ENCODE measurements at regions of chr20 and their contacts with region 1.

Region 1: DNA sequence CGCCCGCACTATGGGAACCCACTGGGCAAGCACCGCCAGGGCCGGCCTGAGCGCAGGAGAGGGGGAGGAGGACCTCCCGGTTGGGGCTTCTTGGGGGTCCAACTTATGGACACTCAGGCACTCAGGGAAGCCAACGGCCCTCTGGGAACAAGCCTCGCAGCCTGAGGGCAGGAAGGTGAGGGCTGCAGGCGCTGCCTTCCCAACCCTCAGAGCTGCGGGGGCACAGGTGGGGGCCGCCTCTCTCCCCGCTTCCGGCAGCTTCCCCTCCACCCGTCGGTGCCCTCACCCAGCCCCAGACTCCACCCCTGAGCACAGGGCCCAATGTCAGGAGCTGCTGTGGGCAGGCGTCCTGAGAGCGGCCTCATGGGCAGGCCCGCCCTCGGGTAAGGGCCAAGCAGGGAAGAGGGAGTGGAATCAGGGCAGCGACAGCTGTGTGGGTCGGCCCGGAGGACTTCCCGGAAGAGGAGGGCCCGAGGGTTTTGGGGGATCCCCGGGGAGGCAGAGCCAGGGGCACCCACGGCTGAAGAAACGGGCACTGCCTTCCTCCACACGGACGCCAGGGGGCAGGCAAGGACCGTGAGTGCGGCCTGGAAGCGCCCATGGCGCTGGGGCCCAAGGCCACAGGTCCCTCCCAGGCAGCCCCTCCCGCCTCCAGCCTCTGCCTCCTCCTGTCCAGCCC is 488 bp upstream of the PTK6 start:
- DNase-seq: peak; percentile 96 to 98 (median 97)
- H3K4me3 ChIP-seq: peak overlapping the region; percentile 13 to 77 (median 41)
- H3K4me3 Mint-ChIP-seq: peak overlapping the region; percentile 65 to 84
- H3K27ac ChIP-seq: peak overlapping the region; percentile 89 to 90
- H3K27ac Mint-ChIP-seq: peak overlapping the region; percentile 82 to 93 (median 90)
- H3K4me1 ChIP-seq: peaks cover 23 to 28% of the 10 kb centered on the region in 2 donors
- H3K4me1 Mint-ChIP-seq: peaks cover 16% of the 10 kb centered on the region
- H3K27me3 ChIP-seq: peaks cover 0 to 18% of the 10 kb centered on the region in 2 donors
- H3K27me3 Mint-ChIP-seq: peaks cover 9 to 22% (median 13%) of the 10 kb centered on the region in 3 donors
- CTCF ChIP-seq: peak; percentile 96

Region 2: DNA sequence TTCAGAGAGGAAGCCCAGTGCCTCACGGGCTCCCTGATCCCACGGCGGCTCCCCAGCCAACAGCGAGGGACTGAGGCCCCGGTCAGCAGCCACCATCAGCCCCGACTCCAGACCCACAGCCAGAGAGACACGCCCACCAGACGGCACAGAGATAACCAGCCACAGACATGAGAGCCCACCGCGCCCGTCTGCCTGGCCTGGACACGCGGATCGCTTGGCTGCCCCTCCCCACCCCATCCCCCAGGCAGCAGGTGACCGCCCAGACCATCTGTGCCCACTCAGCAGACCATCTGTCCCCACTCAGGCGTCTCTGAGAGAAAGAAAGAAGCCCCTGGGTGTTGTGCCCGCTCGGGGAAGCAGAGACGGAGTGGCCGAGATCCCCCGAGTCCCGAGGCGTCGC is 121.0 kb before region 1 on chr20:
- intact Hi-C with region 1: no loop called
- DNase-seq: no peak
- H3K4me3 ChIP-seq: no peak overlapping the region
- H3K4me3 Mint-ChIP-seq: no peak overlapping the region
- H3K27ac ChIP-seq: no peak overlapping the region
- H3K27ac Mint-ChIP-seq: no peak overlapping the region
- H3K4me1 ChIP-seq: no peaks in the 10 kb centered on the region
- H3K4me1 Mint-ChIP-seq: no peaks in the 10 kb centered on the region
- H3K27me3 ChIP-seq: no peaks in the 10 kb centered on the region
- H3K27me3 Mint-ChIP-seq: peaks cover 7 to 11% (median 8%) of the 10 kb centered on the region in 3 donors
- CTCF ChIP-seq: no peak

Region 3: GRCh38 chr20:63501818-63502670 is 35.6 kb before region 1 on chr20:
- intact Hi-C with region 1: no loop called
- DNase-seq: no peak
- H3K4me3 ChIP-seq: no peak overlapping the region
- H3K4me3 Mint-ChIP-seq: no peak overlapping the region
- H3K27ac ChIP-seq: no peak overlapping the region
- H3K27ac Mint-ChIP-seq: no peak overlapping the region
- H3K4me1 ChIP-seq: peaks cover 4 to 13% of the 10 kb centered on the region in 2 donors
- H3K4me1 Mint-ChIP-seq: no peaks in the 10 kb centered on the region
- H3K27me3 ChIP-seq: peaks cover 8 to 36% of the 10 kb centered on the region in 2 donors
- H3K27me3 Mint-ChIP-seq: peaks cover 39 to 64% (median 41%) of the 10 kb centered on the region in 3 donors
- CTCF ChIP-seq: no peak

Region 4: GRCh38 chr20:63520504-63520933 is 17.1 kb before region 1 on chr20 and contains the start of gene PPDPF:
- intact Hi-C with region 1: loop called (anchors 1 to 2 kb)
- DNase-seq: peak; percentile 73 to 83 (median 75)
- H3K4me3 ChIP-seq: peak within 1 kb of the TSS; percentile 50 to 83 (median 68)
- H3K4me3 Mint-ChIP-seq: peak within 1 kb of the TSS; percentile 78 to 83
- H3K27ac ChIP-seq: peak within 1 kb of the TSS in 1 of 2 donors; percentile 53
- H3K27ac Mint-ChIP-seq: peak within 1 kb of the TSS; percentile 19 to 85 (median 63)
- H3K4me1 ChIP-seq: peaks cover 16 to 26% of the 10 kb centered on the region in 2 donors
- H3K4me1 Mint-ChIP-seq: peaks cover 12% of the 10 kb centered on the region
- H3K27me3 ChIP-seq: peaks cover 0 to 23% of the 10 kb centered on the region in 2 donors
- H3K27me3 Mint-ChIP-seq: peaks cover 24 to 41% (median 26%) of the 10 kb centered on the region in 3 donors
- CTCF ChIP-seq: no peak
- polyA plus RNA-seq, gene PPDPF: 13.4 to 39.9 (median 26.1) TPM

Region 5: GRCh38 chr20:63627129-63627750 is 89.6 kb after region 1 on chr20:
- intact Hi-C with region 1: loop called (anchors 5 kb)
- DNase-seq: peak; percentile 94 to 96 (median 95)
- H3K4me3 ChIP-seq: peak overlapping the region; percentile 91 to 96 (median 93)
- H3K4me3 Mint-ChIP-seq: peak overlapping the region; percentile 95 to 96
- H3K27ac ChIP-seq: peak overlapping the region; percentile 82 to 88
- H3K27ac Mint-ChIP-seq: peak overlapping the region; percentile 75 to 91 (median 83)
- H3K4me1 ChIP-seq: peaks cover 17 to 29% of the 10 kb centered on the region in 2 donors
- H3K4me1 Mint-ChIP-seq: peaks cover 30% of the 10 kb centered on the region
- H3K27me3 ChIP-seq: no peaks in the 10 kb centered on the region
- H3K27me3 Mint-ChIP-seq: peaks cover 0 to 2% (median 2%) of the 10 kb centered on the region in 3 donors
- CTCF ChIP-seq: no peak

Region 6: DNA sequence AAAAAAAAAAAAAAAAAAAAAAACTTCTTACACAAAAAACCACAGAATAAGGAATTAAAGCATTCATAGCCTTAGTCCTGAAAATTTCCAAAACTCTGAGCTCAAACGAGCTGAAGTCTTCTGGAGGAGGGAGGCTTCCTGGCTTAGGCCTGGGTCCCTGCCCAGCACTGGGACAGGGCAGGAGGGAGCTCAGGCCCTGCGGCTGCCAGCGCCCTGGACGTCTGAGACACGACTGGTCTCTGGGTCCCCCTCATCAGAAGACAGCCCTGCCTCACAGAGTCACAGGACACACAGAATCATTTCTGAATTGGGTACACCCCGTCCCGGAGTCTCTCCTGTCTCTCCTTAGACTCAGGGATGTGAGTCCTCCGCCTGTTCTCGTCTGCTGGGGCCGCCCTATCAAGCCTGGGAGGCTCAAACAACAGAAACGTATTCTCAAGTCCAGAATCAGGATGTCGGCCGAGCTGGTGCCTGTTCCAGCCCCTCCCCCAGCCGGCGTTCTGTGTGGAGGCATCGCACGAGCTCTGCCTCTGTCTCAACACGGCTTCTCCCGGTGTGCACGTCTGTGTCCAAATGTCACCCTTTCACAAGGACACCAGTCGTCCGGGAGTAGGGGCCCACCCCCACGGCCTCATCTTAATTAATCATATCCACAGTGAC is 254.0 kb after region 1 on chr20:
- intact Hi-C with region 1: loop called in 1 of 2 experiments (anchors 5 kb)
- DNase-seq: no peak
- H3K4me3 ChIP-seq: no peak overlapping the region
- H3K4me3 Mint-ChIP-seq: no peak overlapping the region
- H3K27ac ChIP-seq: no peak overlapping the region
- H3K27ac Mint-ChIP-seq: no peak overlapping the region
- H3K4me1 ChIP-seq: peaks cover 0 to 1% of the 10 kb centered on the region in 2 donors
- H3K4me1 Mint-ChIP-seq: no peaks in the 10 kb centered on the region
- H3K27me3 ChIP-seq: no peaks in the 10 kb centered on the region
- H3K27me3 Mint-ChIP-seq: peaks cover 4 to 12% (median 11%) of the 10 kb centered on the region in 3 donors
- CTCF ChIP-seq: no peak

Region 7: GRCh38 chr20:63973636-63974402 is 436.2 kb after region 1 on chr20:
- intact Hi-C with region 1: loop called in 1 of 2 experiments (anchors 5 kb)
- DNase-seq: peak; percentile 79 to 83 (median 80)
- H3K4me3 ChIP-seq: peak overlapping the region in 1 of 3 experiments; percentile 42
- H3K4me3 Mint-ChIP-seq: peak overlapping the region in 1 of 2 donors; percentile 46
- H3K27ac ChIP-seq: no peak overlapping the region
- H3K27ac Mint-ChIP-seq: peak overlapping the region in 2 of 7 donors; percentile 0 to 77
- H3K4me1 ChIP-seq: peaks cover 23 to 40% of the 10 kb centered on the region in 2 donors
- H3K4me1 Mint-ChIP-seq: peaks cover 30% of the 10 kb centered on the region
- H3K27me3 ChIP-seq: peaks cover 0 to 20% of the 10 kb centered on the region in 2 donors
- H3K27me3 Mint-ChIP-seq: peaks cover 20 to 35% (median 20%) of the 10 kb centered on the region in 3 donors
- CTCF ChIP-seq: peak; percentile 98

Measured in CD14-positive monocyte (primary cell).